B cell (primary cell): ENCODE measurements at regions of chr2 and their contacts with region 1.

Region 1: GRCh38 chr2:74334931-74335333 is 8.3 kb downstream of the SLC4A5 start:
- DNase-seq: peak; percentile 76
- ATAC-seq: peak; percentile 74
- H3K4me3 ChIP-seq: no peak overlapping the region
- H3K4me3 Mint-ChIP-seq: no peak overlapping the region
- H3K27ac ChIP-seq: no peak overlapping the region
- H3K27ac Mint-ChIP-seq: no peak overlapping the region
- H3K4me1 ChIP-seq: no peaks in the 10 kb centered on the region
- H3K4me1 Mint-ChIP-seq: no peaks in the 10 kb centered on the region
- H3K27me3 ChIP-seq: no peaks in the 10 kb centered on the region
- H3K27me3 Mint-ChIP-seq: no peaks in the 10 kb centered on the region
- CTCF ChIP-seq: peak; percentile 100

Region 2: DNA sequence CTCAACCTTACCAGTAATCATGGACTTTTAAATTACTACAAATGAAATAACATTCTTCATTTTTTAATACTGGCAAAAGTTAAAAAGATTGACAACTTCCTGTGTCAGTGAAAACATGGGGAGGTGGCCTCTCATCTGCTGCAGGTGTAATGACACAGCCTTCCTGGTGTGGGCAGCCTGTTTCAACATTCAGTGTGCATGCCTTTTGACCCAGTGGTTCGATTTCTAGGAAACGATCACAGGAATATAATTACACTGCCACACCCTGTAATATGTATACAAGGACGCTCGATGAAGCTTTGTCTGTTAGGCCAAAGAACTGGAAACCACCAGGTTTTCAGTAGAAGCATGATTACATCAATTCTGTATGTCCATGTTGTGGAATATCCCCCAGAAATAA is 67.9 kb before region 1 on chr2:
- CTCF ChIA-PET with region 1: interaction called, 11 read pairs
- POLR2A ChIA-PET with region 1: no interaction called
- intact Hi-C with region 1: no loop called
- DNase-seq: peak; percentile 29
- ATAC-seq: no peak
- H3K4me3 ChIP-seq: no peak overlapping the region
- H3K4me3 Mint-ChIP-seq: no peak overlapping the region
- H3K27ac ChIP-seq: no peak overlapping the region
- H3K27ac Mint-ChIP-seq: no peak overlapping the region
- H3K4me1 ChIP-seq: no peaks in the 10 kb centered on the region
- H3K4me1 Mint-ChIP-seq: peaks cover 2% of the 10 kb centered on the region
- H3K27me3 ChIP-seq: no peaks in the 10 kb centered on the region
- H3K27me3 Mint-ChIP-seq: no peaks in the 10 kb centered on the region
- CTCF ChIP-seq: no peak

Region 3: DNA sequence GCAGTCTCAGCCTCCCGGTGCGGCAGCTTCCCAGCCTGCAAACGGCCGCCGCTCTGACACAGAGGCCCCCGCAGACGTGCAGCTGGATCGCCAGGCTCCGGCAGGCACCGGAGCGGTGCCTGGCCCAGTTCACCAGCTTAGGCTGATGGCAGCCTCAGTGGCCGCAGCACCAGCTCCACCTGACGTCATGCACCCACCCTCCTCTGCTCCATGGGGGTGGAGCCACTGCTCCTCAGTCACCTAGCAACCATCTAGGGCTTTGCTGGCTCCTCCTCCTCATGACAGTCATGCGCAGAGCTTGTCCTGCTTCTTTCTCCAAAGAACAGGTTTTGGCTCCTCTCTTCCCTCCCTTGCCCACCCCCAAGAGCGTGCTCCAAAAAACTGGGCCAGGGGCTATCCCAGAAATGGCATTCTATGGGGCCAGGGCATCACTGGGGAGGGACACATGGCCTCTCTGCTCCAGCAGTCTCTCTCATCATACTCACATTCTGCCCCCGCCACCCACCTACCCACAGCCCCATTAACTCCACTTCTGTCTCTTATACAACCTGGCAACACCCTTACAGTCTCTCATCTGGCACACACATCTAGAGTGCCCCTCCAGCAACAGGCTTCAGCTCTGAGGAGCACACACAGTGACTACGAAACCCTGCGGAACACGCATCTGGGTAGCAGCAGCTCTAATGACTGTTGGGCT is 39.7 kb after region 1 on chr2:
- CTCF ChIA-PET with region 1: interaction called, 10 read pairs
- POLR2A ChIA-PET with region 1: no interaction called
- intact Hi-C with region 1: no loop called
- DNase-seq: no peak
- ATAC-seq: no peak
- H3K4me3 ChIP-seq: no peak overlapping the region
- H3K4me3 Mint-ChIP-seq: no peak overlapping the region
- H3K27ac ChIP-seq: no peak overlapping the region
- H3K27ac Mint-ChIP-seq: no peak overlapping the region
- H3K4me1 ChIP-seq: peaks cover 0 to under 1% of the 10 kb centered on the region in 2 donors
- H3K4me1 Mint-ChIP-seq: peaks cover 3% of the 10 kb centered on the region
- H3K27me3 ChIP-seq: no peaks in the 10 kb centered on the region
- H3K27me3 Mint-ChIP-seq: no peaks in the 10 kb centered on the region
- CTCF ChIP-seq: no peak